GM12878 (cell line): ENCODE measurements at regions of chr15 and their contacts with region 1.

Region 1: DNA sequence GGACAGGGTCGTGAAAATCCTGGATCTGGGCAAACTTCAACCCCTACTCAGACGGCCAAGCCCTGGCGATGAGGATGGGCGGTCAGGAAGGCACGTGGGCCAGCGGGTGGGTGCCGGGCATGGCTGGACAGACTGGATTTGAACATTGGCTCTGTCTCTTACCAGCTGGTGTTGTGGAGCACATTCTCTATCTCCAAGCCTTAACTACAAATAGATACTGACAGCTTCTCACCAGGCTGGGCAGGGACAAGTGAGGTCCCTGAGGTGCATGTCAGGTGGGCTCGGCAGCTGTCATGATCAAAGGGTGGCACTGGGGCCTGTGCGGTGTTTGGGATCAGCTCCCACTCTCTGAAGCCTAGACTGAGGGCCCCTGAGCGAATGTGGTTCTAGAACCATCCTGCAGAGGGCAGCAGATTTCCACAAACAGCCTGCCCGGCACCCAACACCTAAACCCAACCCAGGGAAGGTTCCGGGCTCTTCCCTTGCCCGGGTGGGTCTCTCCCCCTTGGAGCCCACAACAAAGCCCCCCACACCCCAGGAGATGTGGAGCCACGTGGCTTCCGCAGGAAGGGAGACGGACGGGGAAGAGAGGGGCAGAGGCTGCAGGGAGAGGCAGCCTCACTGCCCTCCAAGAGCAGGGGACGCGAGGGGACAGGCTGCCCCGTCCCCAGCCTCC is 58.4 kb downstream of the RGMA start:
- DNase-seq: peak; percentile 7
- ATAC-seq: peak; percentile 93
- H3K4me3 ChIP-seq: no peak overlapping the region
- H3K27ac ChIP-seq: no peak overlapping the region
- H3K4me1 ChIP-seq: no peaks in the 10 kb centered on the region
- H3K27me3 ChIP-seq: no peaks in the 10 kb centered on the region
- CTCF ChIP-seq: peak; percentile 80 to 88 (median 85); a peak in 5 of 6 replicates
- EP300 ChIP-seq: no peak
- POLR2A ChIP-seq: no peak
- RAD21 ChIP-seq: peak; percentile 78

Region 2: GRCh38 chr15:92803847-92804609 is 226.5 kb before region 1 on chr15:
- CTCF ChIA-PET with region 1: interaction called, 39 read pairs
- POLR2A ChIA-PET with region 1: interaction called, 5 read pairs
- RAD21 ChIA-PET with region 1: interaction called, 29 read pairs
- SMC1A ChIA-PET with region 1: no interaction called
- in situ Hi-C with region 1: loop called (anchors 5 kb)
- intact Hi-C with region 1: loop called (anchors 10 kb)
- DNase-seq: peak; percentile 65
- ATAC-seq: peak; percentile 64
- H3K4me3 ChIP-seq: no peak overlapping the region
- H3K27ac ChIP-seq: peak overlapping the region; percentile 48
- H3K4me1 ChIP-seq: peaks cover 13% of the 10 kb centered on the region
- H3K27me3 ChIP-seq: no peaks in the 10 kb centered on the region
- CTCF ChIP-seq: no peak
- EP300 ChIP-seq: peak; percentile 72 to 81; a peak in 3 of 4 replicates
- POLR2A ChIP-seq: no peak
- RAD21 ChIP-seq: no peak

Region 3: DNA sequence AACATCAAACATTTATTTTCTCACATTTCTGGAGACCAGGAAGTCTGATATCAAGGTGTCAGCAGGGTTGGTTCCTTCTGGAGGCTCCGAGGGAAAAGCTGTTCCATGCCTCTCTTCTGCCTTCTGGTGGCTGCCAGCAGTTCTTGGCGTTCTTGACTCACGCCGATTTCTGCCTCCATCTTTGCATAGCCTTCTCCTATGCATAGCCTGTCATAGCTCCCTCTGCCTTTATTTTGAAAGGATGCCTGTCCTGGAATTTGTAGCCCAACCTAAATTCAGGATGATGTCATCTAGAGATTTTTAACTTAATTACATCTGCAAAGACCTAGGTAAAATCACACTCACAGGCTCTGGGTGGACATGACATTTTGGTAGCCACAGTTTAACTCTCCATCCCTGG is 12.0 kb before region 1 on chr15:
- CTCF ChIA-PET with region 1: interaction called, 21 read pairs
- POLR2A ChIA-PET with region 1: interaction called, 3 read pairs
- RAD21 ChIA-PET with region 1: no interaction called
- SMC1A ChIA-PET with region 1: interaction called, 6 read pairs
- in situ Hi-C with region 1: no loop called
- intact Hi-C with region 1: no loop called
- DNase-seq: no peak
- ATAC-seq: no peak
- H3K4me3 ChIP-seq: no peak overlapping the region
- H3K27ac ChIP-seq: no peak overlapping the region
- H3K4me1 ChIP-seq: peaks cover 13% of the 10 kb centered on the region
- H3K27me3 ChIP-seq: no peaks in the 10 kb centered on the region
- CTCF ChIP-seq: 0 out of 6 replicates have a peak, but pooled peaks of 1 of the 3 experiments have one; percentile 3
- EP300 ChIP-seq: no peak
- POLR2A ChIP-seq: no peak
- RAD21 ChIP-seq: no peak

Region 4: GRCh38 chr15:93072411-93073394 is 42.1 kb after region 1 on chr15:
- CTCF ChIA-PET with region 1: no interaction called
- POLR2A ChIA-PET with region 1: no interaction called
- RAD21 ChIA-PET with region 1: no interaction called
- SMC1A ChIA-PET with region 1: no interaction called
- in situ Hi-C with region 1: no loop called
- intact Hi-C with region 1: no loop called
- DNase-seq: no peak
- ATAC-seq: no peak
- H3K4me3 ChIP-seq: no peak overlapping the region
- H3K27ac ChIP-seq: no peak overlapping the region
- H3K4me1 ChIP-seq: no peaks in the 10 kb centered on the region
- H3K27me3 ChIP-seq: peaks cover 6 to 21% of the 10 kb centered on the region in 2 experiments
- CTCF ChIP-seq: no peak
- EP300 ChIP-seq: no peak
- POLR2A ChIP-seq: no peak
- RAD21 ChIP-seq: no peak

Region 5: DNA sequence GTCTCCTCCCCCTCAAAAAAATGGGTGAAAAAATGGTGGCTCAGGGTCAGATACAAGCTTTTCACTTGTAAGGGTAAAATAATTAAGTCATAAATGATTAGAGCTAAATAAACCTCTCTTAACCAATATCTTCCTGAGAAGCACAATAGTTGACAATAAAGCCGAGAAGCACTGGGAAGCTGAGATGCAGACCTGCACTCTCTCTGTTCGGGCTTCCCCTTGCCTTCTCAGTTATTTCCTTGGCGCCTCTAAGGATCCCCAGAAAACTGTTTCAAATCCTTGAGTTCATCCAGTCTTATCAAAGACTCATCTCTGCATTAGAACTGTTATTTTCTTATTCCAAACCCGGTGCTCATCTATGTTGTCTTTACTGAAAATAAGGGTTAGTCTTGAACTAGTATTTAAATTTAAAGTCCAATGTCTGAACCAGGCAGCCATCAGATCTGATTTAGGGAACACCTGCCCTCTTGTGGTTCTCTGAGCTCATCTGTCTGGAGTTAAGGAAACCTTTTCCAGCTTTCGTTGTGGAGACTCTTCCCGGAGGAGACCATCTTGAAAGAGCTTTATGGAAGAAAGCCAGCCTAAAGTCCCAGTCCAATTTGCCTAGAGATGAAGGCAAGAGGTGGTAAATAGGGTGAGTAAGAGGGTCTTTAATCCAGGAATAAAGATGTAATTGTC is 944.4 kb after region 1 on chr15:
- CTCF ChIA-PET with region 1: no interaction called
- POLR2A ChIA-PET with region 1: no interaction called
- RAD21 ChIA-PET with region 1: interaction called, 5 read pairs
- SMC1A ChIA-PET with region 1: no interaction called
- in situ Hi-C with region 1: no loop called
- intact Hi-C with region 1: loop called (anchors 5 kb)
- DNase-seq: no peak
- ATAC-seq: no peak
- H3K4me3 ChIP-seq: no peak overlapping the region
- H3K27ac ChIP-seq: no peak overlapping the region
- H3K4me1 ChIP-seq: no peaks in the 10 kb centered on the region
- H3K27me3 ChIP-seq: no peaks in the 10 kb centered on the region
- CTCF ChIP-seq: 0 out of 6 replicates have a peak, but pooled peaks of 1 of the 3 experiments have one; percentile 8
- EP300 ChIP-seq: no peak
- POLR2A ChIP-seq: no peak
- RAD21 ChIP-seq: no peak